B cell (primary cell): ENCODE measurements at regions of chr2 and their contacts with region 1.

Region 1: GRCh38 chr2:25991965-25992364 is 9.7 kb upstream of the KIF3C start:
- DNase-seq: no peak
- ATAC-seq: no peak
- H3K4me3 ChIP-seq: no peak overlapping the region
- H3K4me3 Mint-ChIP-seq: no peak overlapping the region
- H3K27ac ChIP-seq: no peak overlapping the region
- H3K27ac Mint-ChIP-seq: no peak overlapping the region
- H3K4me1 ChIP-seq: peaks cover 0 to 2% of the 10 kb centered on the region in 2 donors
- H3K4me1 Mint-ChIP-seq: peaks cover 1% of the 10 kb centered on the region
- H3K27me3 ChIP-seq: no peaks in the 10 kb centered on the region
- H3K27me3 Mint-ChIP-seq: no peaks in the 10 kb centered on the region
- CTCF ChIP-seq: no peak

Region 2: GRCh38 chr2:25851740-25852503 is 140.0 kb before region 1 on chr2:
- CTCF ChIA-PET with region 1: interaction called, 12 read pairs
- POLR2A ChIA-PET with region 1: no interaction called
- intact Hi-C with region 1: no loop called
- DNase-seq: peak; percentile 71
- ATAC-seq: peak; percentile 95
- H3K4me3 ChIP-seq: no peak overlapping the region
- H3K4me3 Mint-ChIP-seq: peak overlapping the region; percentile 40
- H3K27ac ChIP-seq: peak overlapping the region in 1 of 2 donors; percentile 45
- H3K27ac Mint-ChIP-seq: peak overlapping the region; percentile 39
- H3K4me1 ChIP-seq: peaks cover 11 to 14% of the 10 kb centered on the region in 2 donors
- H3K4me1 Mint-ChIP-seq: peaks cover 32% of the 10 kb centered on the region
- H3K27me3 ChIP-seq: no peaks in the 10 kb centered on the region
- H3K27me3 Mint-ChIP-seq: no peaks in the 10 kb centered on the region
- CTCF ChIP-seq: peak; percentile 83

Region 3: GRCh38 chr2:26144953-26145680 is 153.2 kb after region 1 on chr2:
- CTCF ChIA-PET with region 1: interaction called, 40 read pairs
- POLR2A ChIA-PET with region 1: interaction called, 5 read pairs
- intact Hi-C with region 1: loop called (anchors 1 kb)
- DNase-seq: peak; percentile 69
- ATAC-seq: peak; percentile 73
- H3K4me3 ChIP-seq: no peak overlapping the region
- H3K4me3 Mint-ChIP-seq: peak overlapping the region; percentile 24
- H3K27ac ChIP-seq: no peak overlapping the region
- H3K27ac Mint-ChIP-seq: no peak overlapping the region
- H3K4me1 ChIP-seq: no peaks in the 10 kb centered on the region
- H3K4me1 Mint-ChIP-seq: no peaks in the 10 kb centered on the region
- H3K27me3 ChIP-seq: peaks cover 0 to 3% (median 0%) of the 10 kb centered on the region in 4 experiments
- H3K27me3 Mint-ChIP-seq: peaks cover 10% of the 10 kb centered on the region
- CTCF ChIP-seq: peak; percentile 75

Region 4: DNA sequence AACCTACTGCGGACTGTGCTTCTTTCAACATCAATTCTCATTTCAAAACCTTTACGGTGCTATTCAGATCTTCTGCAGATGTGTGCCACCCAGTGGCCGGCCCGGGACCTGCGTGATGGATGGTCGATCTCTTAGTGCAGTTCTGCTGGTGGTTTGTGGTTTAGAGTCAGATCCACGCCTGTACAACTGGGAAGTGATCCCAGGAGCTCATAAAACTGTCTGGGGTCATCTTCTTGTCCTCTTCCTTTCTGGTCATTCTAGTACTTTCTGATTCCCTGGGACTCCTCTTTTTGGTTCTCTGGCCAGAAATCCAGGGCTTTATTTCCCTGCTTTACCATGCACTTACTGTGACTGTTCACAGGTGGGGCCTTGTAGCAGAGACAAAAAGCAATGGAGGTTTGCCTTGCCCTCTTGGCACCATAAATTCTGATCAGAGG is 338.2 kb after region 1 on chr2:
- CTCF ChIA-PET with region 1: interaction called, 5 read pairs
- POLR2A ChIA-PET with region 1: no interaction called
- intact Hi-C with region 1: loop called (anchors 1 kb)
- DNase-seq: peak; percentile 79
- ATAC-seq: peak; percentile 95
- H3K4me3 ChIP-seq: no peak overlapping the region
- H3K4me3 Mint-ChIP-seq: no peak overlapping the region
- H3K27ac ChIP-seq: no peak overlapping the region
- H3K27ac Mint-ChIP-seq: no peak overlapping the region
- H3K4me1 ChIP-seq: peaks cover 2 to 5% of the 10 kb centered on the region in 2 donors
- H3K4me1 Mint-ChIP-seq: peaks cover 6% of the 10 kb centered on the region
- H3K27me3 ChIP-seq: no peaks in the 10 kb centered on the region
- H3K27me3 Mint-ChIP-seq: no peaks in the 10 kb centered on the region
- CTCF ChIP-seq: peak; percentile 97